ENCODE measurements at regions of chr14 and their contacts with region 1.

Region 1: GRCh38 chr14:75301666-75302325 is 23.2 kb downstream of the FOS start:
- DNase-seq: peak; percentile 81
- ATAC-seq: peak; percentile 80
- H3K4me3 Mint-ChIP-seq: peak overlapping the region; percentile 4
- H3K27ac Mint-ChIP-seq: peak overlapping the region; percentile 83
- H3K4me1 Mint-ChIP-seq: peaks cover 22% of the 10 kb centered on the region
- H3K27me3 Mint-ChIP-seq: no peaks in the 10 kb centered on the region
- CTCF ChIP-seq: no peak

Region 2: DNA sequence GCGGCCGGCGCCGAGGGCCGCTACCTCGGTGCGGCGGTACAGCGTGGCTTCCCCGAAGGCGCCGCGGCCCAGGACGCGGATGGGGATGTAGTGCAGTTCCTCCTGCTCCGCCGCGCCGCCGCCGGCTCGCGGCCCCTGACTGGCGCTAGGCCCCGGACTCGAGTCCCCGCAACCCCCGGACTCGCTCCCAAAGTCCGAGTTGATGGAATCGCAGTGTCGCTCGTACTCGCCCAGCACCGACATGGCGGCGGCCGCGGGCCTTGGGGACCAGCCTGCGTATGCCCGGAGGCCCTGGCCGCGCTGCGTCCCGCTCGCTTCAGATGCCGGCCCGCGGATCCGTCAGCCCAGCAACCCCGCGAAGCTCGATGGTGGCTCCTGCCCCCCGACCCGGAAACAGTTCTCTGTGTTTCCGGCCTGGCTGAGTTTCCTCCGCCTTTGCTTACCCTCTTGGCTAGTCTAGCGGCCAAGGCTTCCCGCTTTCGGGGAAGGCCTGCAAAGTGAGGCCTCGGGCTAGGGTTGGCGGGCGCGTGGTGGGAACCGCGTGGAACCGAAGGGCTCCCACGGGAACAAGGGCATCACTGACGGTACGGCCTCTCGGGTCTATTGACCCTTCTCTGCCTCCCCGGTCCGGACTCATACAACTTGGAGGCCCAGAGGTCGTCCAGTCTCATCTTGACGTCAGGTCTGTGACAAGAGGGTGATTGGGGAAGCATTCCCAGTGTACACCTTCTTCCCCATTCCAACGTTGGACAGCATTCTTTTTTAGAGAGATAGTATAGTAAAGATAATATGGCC is 174.9 kb before region 1 on chr14 and contains the start of gene NEK9:
- CTCF ChIA-PET with region 1: interaction called, 99 read pairs
- POLR2A ChIA-PET with region 1: interaction called, 8 read pairs
- intact Hi-C with region 1: no loop called
- DNase-seq: peak; percentile 93
- ATAC-seq: peak; percentile 94
- H3K4me3 Mint-ChIP-seq: peak within 1 kb of the TSS; percentile 99
- H3K27ac Mint-ChIP-seq: peak within 1 kb of the TSS; percentile 99
- H3K4me1 Mint-ChIP-seq: peaks cover 39% of the 10 kb centered on the region
- H3K27me3 Mint-ChIP-seq: no peaks in the 10 kb centered on the region
- CTCF ChIP-seq: no peak
- total RNA-seq, gene NEK9: 54.9 to 59.5 TPM

Region 3: DNA sequence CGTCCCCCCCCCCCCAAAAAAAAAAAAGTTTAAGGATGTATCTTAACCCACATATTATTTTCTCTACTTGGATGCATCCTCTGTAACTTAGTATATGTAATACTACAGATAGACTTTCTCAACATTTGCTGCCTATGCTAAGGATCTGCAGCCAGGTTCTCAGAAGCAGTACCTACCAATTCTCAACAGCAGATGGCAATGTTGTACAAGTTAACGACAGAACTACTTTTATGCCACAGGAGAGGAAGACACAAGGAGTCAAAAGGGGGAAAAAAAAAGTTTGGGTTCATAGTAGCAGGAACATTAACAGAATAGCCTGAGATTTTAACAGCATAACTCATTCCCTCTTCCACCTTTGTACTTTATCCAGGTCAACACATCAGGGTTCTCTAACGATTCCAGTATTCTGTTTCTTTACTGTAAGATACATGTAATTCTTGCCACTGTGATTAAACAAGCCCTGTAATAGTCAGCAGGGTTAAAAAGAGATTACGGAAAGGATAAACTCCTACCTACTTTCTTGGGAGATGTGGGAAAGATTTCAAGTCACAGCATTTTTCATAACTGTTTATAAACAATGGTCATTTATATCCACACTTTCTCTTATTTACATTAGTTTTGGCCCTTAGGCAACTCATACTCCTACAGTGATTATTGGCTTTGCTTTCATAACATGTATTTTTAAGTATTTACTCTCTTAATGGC is 169.3 kb before region 1 on chr14:
- CTCF ChIA-PET with region 1: interaction called, 268 read pairs
- POLR2A ChIA-PET with region 1: interaction called, 8 read pairs
- intact Hi-C with region 1: no loop called
- DNase-seq: peak; percentile 57
- ATAC-seq: peak; percentile 85
- H3K4me3 Mint-ChIP-seq: no peak overlapping the region
- H3K27ac Mint-ChIP-seq: peak overlapping the region; percentile 32
- H3K4me1 Mint-ChIP-seq: peaks cover 19% of the 10 kb centered on the region
- H3K27me3 Mint-ChIP-seq: no peaks in the 10 kb centered on the region
- CTCF ChIP-seq: peak; percentile 72

Region 4: DNA sequence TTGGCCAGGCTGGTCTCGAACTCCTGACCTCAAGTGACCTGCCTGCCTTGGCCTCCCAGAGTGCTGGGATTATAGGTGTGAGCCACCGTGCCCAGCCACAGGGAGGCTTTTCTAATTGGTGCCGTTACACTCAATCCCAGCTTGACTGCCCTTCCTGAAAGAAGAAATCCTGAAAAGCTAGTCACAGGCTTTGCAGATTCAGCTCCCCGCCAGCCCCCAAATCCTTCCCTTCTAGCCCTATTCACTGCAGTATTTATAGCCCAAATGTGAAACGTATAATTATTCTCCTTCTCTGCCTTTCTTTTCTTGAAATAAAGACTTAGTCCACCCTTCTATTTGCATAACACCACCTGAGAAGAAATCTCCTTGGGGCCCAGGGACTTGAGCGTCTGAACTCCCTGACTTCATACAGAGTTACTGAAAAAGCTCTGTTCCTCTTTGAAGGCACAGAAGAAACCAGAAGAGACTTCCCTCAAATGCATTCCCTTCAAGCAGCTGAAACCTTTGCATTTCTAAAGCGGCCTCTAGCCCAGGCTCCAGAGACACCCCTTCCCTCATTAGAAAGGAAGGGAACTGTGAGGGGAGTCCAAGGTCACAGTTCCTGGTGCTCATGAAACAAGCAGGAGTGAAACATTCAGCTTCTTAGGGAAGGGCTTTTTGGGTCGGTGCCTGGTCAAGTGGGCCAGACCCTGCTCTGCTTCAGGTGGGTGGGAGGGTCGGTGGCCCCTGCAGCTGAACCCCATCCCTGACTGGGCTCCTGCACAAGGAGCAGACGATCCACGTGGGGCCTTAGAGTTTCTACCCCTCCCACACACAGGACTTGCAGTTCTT is 178.2 kb after region 1 on chr14:
- CTCF ChIA-PET with region 1: no interaction called
- POLR2A ChIA-PET with region 1: no interaction called
- intact Hi-C with region 1: no loop called
- DNase-seq: no peak
- ATAC-seq: no peak
- H3K4me3 Mint-ChIP-seq: no peak overlapping the region
- H3K27ac Mint-ChIP-seq: no peak overlapping the region
- H3K4me1 Mint-ChIP-seq: no peaks in the 10 kb centered on the region
- H3K27me3 Mint-ChIP-seq: peaks cover 1% of the 10 kb centered on the region
- CTCF ChIP-seq: no peak

Region 5: DNA sequence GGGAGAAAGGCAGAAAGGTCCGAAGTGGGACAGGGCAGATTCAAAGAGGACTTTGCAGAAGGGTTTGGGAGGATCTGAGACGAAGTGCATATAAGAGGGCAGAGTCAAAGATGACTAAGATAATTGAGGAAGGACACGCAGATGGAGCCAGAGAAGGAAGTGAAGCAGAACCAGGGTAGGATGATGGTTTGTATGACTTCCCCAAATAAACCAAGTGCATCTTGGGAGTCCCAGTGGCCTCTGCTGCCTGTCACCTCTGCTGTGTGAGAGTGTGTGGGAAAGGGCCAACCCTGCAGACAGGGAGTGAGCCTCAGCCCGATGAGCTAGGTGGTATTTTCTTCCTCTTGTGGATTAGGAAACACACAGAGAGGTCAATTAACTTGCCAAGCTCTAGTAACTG is 313.4 kb after region 1 on chr14:
- CTCF ChIA-PET with region 1: no interaction called
- POLR2A ChIA-PET with region 1: no interaction called
- intact Hi-C with region 1: no loop called
- DNase-seq: no peak
- ATAC-seq: no peak
- H3K4me3 Mint-ChIP-seq: no peak overlapping the region
- H3K27ac Mint-ChIP-seq: no peak overlapping the region
- H3K4me1 Mint-ChIP-seq: no peaks in the 10 kb centered on the region
- H3K27me3 Mint-ChIP-seq: no peaks in the 10 kb centered on the region
- CTCF ChIP-seq: no peak

Measured in activated CD8-positive, alpha-beta T cell treated with anti-CD3 and anti-CD28 coated beads for 36 hours (primary cell).